ENCODE measurements at regions of chr10 and their contacts with region 1.

Region 1: GRCh38 chr10:44010873-44011602 is 362.4 kb upstream of the ZNF32 start:
- DNase-seq: peak; percentile 91
- H3K4me3 ChIP-seq: peak overlapping the region; percentile 37
- H3K27ac ChIP-seq: peak overlapping the region; percentile 69
- H3K4me1 ChIP-seq: peaks cover 64% of the 10 kb centered on the region
- CTCF ChIP-seq: no peak

Region 2: DNA sequence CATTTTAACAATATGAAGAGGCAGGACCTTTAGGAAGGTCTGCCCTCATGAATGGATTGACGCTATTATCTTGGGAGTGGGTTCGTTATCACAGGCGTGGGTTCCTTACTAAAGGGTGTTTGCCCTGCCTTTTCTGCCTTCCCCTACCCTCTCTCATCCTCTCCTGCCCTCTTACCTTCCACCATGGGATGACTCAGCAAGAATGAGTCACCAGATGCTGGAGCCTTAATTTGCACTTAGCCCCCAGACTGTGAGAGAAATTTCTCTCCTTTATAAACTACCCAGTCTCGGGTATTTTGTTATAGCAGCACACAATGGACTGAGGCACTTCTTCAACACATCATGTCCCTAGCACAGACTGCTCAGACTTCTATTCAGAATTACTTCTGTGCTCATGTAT is 331.0 kb before region 1 on chr10:
- CTCF ChIA-PET with region 1: no interaction called
- POLR2A ChIA-PET with region 1: no interaction called
- intact Hi-C with region 1: no loop called
- DNase-seq: no peak
- H3K4me3 ChIP-seq: no peak overlapping the region
- H3K27ac ChIP-seq: no peak overlapping the region
- H3K4me1 ChIP-seq: no peaks in the 10 kb centered on the region
- CTCF ChIP-seq: no peak

Region 3: GRCh38 chr10:43922335-43923280 is 88.4 kb before region 1 on chr10:
- CTCF ChIA-PET with region 1: no interaction called
- POLR2A ChIA-PET with region 1: interaction called, 3 read pairs
- intact Hi-C with region 1: loop called (anchors 5 kb)
- DNase-seq: peak; percentile 50
- H3K4me3 ChIP-seq: peak overlapping the region; percentile 22
- H3K27ac ChIP-seq: peak overlapping the region; percentile 52
- H3K4me1 ChIP-seq: peaks cover 32% of the 10 kb centered on the region
- CTCF ChIP-seq: peak; percentile 48

Region 4: DNA sequence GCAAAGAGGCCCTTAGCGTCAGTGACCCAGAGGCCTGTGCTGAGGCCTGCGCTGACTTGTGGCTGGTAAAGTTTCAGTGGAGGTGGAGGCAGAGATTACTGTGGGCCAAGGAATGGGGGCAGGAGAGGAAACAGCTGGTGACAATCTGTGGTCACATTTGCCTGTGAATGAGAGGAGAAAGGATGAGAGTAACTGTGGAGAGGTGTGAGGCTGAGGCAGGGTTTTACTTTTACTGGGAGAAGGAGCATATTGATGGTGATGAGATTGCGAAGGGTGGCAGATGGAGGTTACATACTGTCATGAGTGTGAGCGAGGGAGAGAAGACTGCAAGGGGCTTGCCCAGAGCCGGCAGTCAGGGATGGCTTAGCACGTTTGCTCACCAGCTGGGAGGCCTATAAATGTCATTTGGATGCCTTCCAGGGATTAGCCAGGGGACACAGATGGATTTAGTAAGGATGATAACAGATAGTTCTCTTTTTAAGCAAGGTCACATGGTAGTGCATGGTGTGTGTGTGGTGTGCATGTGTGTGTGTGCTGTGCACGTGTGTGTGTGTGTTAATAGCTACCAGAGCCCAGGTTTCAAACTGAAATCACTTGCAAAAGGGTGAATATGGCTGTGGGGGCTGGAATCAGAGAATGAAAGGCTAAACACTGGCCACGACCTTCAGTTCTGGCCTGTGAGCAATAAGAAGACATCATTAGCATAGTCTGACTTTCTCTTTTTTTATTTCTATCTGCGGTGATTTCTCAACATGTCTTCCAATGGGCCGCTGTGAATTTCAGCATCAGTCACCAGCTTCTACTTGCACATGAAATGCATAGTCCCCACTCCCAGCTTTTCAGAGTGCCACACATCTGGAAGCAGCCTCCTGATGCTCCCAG is 70.9 kb before region 1 on chr10:
- CTCF ChIA-PET with region 1: interaction called, 3 read pairs
- POLR2A ChIA-PET with region 1: interaction called, 31 read pairs
- intact Hi-C with region 1: loop called (anchors 1 kb)
- DNase-seq: peak; percentile 45
- H3K4me3 ChIP-seq: peak overlapping the region; percentile 29
- H3K27ac ChIP-seq: peak overlapping the region; percentile 90
- H3K4me1 ChIP-seq: peaks cover 72% of the 10 kb centered on the region
- CTCF ChIP-seq: no peak

Region 5: DNA sequence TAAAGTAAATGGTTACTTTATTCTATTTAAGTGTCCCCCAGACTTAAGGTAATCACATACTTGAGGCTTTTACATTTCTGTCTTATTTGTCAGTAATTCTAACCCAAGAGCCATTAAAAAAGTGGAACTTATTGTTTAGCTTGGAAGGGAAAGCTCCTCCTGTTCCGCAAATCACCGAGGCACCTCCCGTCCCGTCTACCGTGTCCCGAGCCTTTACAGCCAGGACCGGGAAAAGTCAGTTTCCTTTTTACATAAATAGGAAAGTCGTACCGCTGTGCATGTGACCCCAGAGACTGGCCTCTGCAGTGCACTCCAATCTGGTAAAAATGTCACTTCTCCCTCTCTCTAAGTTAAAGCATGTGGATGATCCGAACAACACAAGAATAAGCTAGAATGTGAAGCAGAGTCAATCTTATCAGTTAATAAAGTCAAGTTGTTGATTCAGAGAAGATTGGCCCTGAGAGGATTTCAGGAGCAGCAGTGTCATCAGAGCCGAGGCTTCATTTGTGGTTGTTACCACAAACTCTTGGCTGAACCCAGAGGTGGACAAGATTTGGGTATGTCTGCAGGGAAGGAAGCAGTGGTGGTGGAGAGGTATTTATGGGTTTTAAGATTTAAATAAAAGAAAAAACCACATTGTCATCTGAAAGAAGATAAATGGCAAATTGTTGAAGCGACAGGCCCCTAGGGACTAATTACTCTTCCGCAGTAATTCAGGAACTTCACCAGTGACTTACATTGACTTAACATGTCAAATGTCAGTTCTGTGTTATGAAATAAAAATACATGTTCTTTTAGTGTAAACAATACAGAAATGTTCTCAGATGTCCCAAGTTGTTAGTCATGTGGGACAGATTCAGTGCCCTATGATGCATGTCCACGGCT is 45.8 kb before region 1 on chr10:
- CTCF ChIA-PET with region 1: no interaction called
- POLR2A ChIA-PET with region 1: interaction called, 3 read pairs
- intact Hi-C with region 1: loop called (anchors 1 kb)
- DNase-seq: peak; percentile 67
- H3K4me3 ChIP-seq: peak overlapping the region; percentile 20
- H3K27ac ChIP-seq: no peak overlapping the region
- H3K4me1 ChIP-seq: peaks cover 28% of the 10 kb centered on the region
- CTCF ChIP-seq: no peak

Region 6: GRCh38 chr10:43981232-43981631 is 29.8 kb before region 1 on chr10:
- CTCF ChIA-PET with region 1: no interaction called
- POLR2A ChIA-PET with region 1: no interaction called
- intact Hi-C with region 1: no loop called
- DNase-seq: no peak
- H3K4me3 ChIP-seq: no peak overlapping the region
- H3K27ac ChIP-seq: no peak overlapping the region
- H3K4me1 ChIP-seq: no peaks in the 10 kb centered on the region
- CTCF ChIP-seq: no peak